Activated CD8-positive, alpha-beta T cell treated with anti-CD3 and anti-CD28 coated beads, Interleukin-2, amount 10 ng/mL, durations not matched to agents 7 days and 5 days (primary cell): ENCODE measurements at regions of chr4 and their contacts with region 1.

Region 1: GRCh38 chr4:183249857-183250256 is 70.2 kb downstream of the CLDN22 start:
- DNase-seq: no peak
- ATAC-seq: no peak
- H3K4me3 Mint-ChIP-seq: no peak overlapping the region
- H3K27ac Mint-ChIP-seq: no peak overlapping the region
- H3K4me1 Mint-ChIP-seq: no peaks in the 10 kb centered on the region
- H3K27me3 Mint-ChIP-seq: peaks cover 2% of the 10 kb centered on the region

Region 2: GRCh38 chr4:183074296-183074990 is 175.4 kb before region 1 on chr4:
- CTCF ChIA-PET with region 1: interaction called, 38 read pairs
- POLR2A ChIA-PET with region 1: no interaction called
- DNase-seq: no peak
- ATAC-seq: no peak
- H3K4me3 Mint-ChIP-seq: no peak overlapping the region
- H3K27ac Mint-ChIP-seq: no peak overlapping the region
- H3K4me1 Mint-ChIP-seq: no peaks in the 10 kb centered on the region
- H3K27me3 Mint-ChIP-seq: peaks cover 4% of the 10 kb centered on the region

Region 3: DNA sequence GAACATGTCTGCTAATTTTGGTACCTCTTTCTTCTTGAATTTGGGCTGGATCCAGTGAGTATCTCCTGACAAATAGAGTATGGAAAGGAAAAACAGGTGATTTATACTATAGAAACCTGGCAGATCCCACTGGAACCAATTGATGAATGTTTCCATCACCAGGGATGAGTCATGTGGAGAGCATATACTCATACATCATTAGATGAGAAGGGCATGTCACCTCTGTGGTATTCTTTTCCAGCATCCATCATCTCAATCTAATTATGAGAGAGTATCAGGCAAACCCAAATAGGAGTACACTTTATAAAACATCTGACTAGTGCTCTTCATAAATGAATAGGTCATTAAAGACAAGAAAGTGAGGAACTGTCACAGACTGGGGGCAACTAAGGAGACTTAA is 20.5 kb before region 1 on chr4:
- CTCF ChIA-PET with region 1: no interaction called
- POLR2A ChIA-PET with region 1: no interaction called
- DNase-seq: no peak
- ATAC-seq: no peak
- H3K4me3 Mint-ChIP-seq: no peak overlapping the region
- H3K27ac Mint-ChIP-seq: no peak overlapping the region
- H3K4me1 Mint-ChIP-seq: no peaks in the 10 kb centered on the region
- H3K27me3 Mint-ChIP-seq: peaks cover 8% of the 10 kb centered on the region

Region 4: DNA sequence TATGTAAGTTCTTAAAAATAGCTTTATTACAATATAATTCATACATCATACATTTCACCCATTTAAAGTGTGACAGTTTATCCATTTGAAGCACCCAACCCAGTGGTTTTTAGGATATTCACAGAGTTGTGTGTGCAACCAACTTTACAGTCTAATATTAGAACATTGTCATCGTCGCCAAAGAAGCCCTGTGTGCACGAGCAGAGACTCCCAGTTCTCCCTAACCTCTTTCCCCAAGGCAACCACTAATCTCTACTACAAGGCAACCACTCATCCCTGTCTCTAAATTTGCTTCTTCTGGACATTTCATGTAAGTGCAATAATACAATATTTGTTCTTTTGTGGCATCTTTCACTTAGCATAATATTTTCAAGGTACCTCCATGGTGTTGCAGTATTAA is 22.5 kb after region 1 on chr4:
- CTCF ChIA-PET with region 1: no interaction called
- POLR2A ChIA-PET with region 1: no interaction called
- DNase-seq: no peak
- ATAC-seq: no peak
- H3K4me3 Mint-ChIP-seq: no peak overlapping the region
- H3K27ac Mint-ChIP-seq: no peak overlapping the region
- H3K4me1 Mint-ChIP-seq: no peaks in the 10 kb centered on the region
- H3K27me3 Mint-ChIP-seq: peaks cover 4% of the 10 kb centered on the region

Region 5: GRCh38 chr4:183505611-183506388 is 255.9 kb after region 1 on chr4:
- CTCF ChIA-PET with region 1: no interaction called
- POLR2A ChIA-PET with region 1: no interaction called
- DNase-seq: peak; percentile 90
- ATAC-seq: peak; percentile 22
- H3K4me3 Mint-ChIP-seq: peak overlapping the region; percentile 93
- H3K27ac Mint-ChIP-seq: peak overlapping the region; percentile 98
- H3K4me1 Mint-ChIP-seq: peaks cover 41% of the 10 kb centered on the region
- H3K27me3 Mint-ChIP-seq: no peaks in the 10 kb centered on the region